ENCODE measurements at regions of chr6 and their contacts with region 1.

Region 1: DNA sequence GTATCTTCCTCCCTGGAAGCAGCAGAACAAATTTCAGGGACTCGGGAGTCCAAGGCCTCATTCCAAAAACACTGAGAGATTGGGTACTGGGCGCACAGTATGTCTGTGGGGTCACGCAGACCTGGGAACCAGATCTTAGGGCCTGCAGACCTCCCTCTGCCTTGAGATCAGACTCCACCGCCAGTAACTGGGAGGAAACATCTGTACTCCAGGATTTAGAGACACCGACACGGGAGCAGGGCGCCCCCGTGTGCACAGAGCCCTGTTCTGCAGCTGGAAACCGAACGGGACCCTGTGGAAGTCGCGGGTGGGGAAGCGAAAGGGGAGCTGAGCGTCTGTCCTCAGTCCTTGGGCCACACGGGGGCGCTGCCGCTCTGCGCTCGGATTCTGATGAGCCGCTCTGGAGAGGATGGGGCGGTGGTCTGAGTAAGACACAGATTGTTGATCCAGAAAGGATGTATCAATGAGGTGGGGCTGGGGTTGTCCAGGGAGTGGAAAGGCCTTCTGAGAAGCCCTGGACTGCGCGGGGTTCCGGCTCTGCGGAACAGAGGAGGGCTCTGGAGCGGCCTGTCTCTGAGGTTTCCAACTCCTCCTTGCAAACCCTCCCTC is 35.7 kb upstream of the HLA-E start:
- DNase-seq: peak; percentile 59 to 87
- H3K4me3 ChIP-seq: no peak overlapping the region
- H3K27ac ChIP-seq: no peak overlapping the region
- H3K4me1 ChIP-seq: no peaks in the 10 kb centered on the region
- H3K27me3 ChIP-seq: peaks cover 82% of the 10 kb centered on the region
- CTCF ChIP-seq: peak; percentile 80

Region 2: DNA sequence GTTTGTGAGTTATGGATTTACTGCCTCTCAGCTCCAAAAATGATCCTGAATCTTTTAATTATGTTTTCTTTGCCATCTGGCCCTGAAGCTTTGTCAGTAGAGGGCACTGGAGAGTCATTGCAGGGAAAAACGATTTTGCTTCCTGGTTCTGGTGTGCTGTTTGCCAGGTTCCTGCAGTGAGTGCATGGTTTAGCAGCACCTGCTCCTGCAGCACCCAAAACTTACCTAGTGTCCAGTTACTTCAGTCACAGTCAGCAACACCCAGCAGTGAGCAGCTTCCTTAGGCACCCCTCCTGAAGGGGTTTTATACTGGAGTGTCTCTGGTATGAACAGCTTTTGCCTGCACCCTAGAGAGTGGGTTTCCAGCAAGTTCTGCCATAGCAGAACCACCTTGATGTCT is 234.4 kb before region 1 on chr6:
- CTCF ChIA-PET with region 1: no interaction called
- POLR2A ChIA-PET with region 1: no interaction called
- intact Hi-C with region 1: loop called (anchors 1 kb)
- DNase-seq: peak; percentile 59 to 63
- H3K4me3 ChIP-seq: no peak overlapping the region
- H3K27ac ChIP-seq: no peak overlapping the region
- H3K4me1 ChIP-seq: no peaks in the 10 kb centered on the region
- H3K27me3 ChIP-seq: no peaks in the 10 kb centered on the region
- CTCF ChIP-seq: peak; percentile 76

Region 3: GRCh38 chr6:30238174-30238795 is 215.3 kb before region 1 on chr6:
- CTCF ChIA-PET with region 1: interaction called, 5 read pairs
- POLR2A ChIA-PET with region 1: no interaction called
- intact Hi-C with region 1: loop called (anchors 5 kb)
- DNase-seq: no peak
- H3K4me3 ChIP-seq: no peak overlapping the region
- H3K27ac ChIP-seq: no peak overlapping the region
- H3K4me1 ChIP-seq: no peaks in the 10 kb centered on the region
- H3K27me3 ChIP-seq: peaks cover 67% of the 10 kb centered on the region
- CTCF ChIP-seq: peak; percentile 55; the same call in 1 of the 2 replicates

Region 4: DNA sequence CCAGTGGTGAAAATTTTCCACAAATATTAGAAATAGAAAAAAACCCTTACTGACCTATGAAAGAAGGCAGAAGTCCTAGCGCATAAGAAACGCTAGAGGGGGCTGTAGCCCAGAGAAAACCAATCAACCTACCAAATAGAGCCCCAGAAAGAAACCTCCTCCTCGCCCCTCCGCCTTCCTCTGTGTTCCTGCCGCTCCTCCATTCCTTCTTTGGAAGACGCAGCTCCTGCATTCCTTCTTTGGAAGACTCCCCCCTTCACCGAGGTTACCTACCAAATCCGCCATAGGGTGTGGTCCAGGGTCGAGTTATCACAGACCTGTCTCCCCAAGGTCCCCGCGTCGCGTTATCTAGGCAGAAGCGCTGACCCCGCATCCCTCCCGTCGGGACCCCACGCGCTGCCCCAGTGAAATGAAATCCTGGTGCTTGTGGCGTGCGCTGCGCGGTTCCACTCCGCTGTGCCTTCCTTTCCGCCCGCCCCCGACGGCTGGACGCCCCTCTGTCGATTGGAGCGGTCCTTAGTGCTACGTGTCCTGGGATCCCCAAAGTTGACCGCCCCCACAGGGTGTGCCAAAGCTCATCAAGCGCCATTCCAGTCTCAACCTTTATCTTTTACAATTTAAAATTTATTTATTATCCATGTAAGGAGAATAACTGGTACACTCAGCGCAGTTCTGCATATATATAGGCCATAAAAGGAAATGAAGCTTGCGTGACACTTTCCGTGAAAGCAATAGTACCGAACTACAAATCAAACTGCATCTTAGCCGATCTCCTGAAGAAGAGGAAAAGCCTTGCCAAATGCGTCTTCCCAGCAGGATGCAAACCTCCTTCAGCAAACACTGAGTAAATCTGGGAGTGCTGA is 95.7 kb before region 1 on chr6:
- CTCF ChIA-PET with region 1: no interaction called
- POLR2A ChIA-PET with region 1: no interaction called
- intact Hi-C with region 1: loop called (anchors 10 kb)
- DNase-seq: peak in 1 of 2 experiments; percentile 31
- H3K4me3 ChIP-seq: no peak overlapping the region
- H3K27ac ChIP-seq: no peak overlapping the region
- H3K4me1 ChIP-seq: no peaks in the 10 kb centered on the region
- H3K27me3 ChIP-seq: peaks cover 47% of the 10 kb centered on the region
- CTCF ChIP-seq: peak; percentile 62

Region 5: DNA sequence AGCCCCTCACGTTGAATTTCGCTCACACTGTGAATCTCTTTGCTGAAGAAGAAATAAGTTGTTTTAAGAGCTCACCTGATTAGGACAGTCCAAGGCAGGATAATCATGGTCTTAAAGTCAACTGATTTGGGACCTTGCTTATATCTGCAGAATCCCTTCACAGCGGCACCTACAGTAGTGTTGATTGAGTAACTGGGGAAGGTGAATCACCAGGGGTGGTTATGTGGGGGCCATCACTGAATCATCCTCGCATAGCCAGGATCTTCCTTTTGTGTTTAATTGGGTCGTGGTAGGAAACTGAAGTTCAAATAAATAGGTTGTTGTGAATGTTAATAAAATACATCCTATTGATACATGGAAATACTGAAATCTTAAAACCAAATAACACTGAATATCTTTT is 929.5 kb after region 1 on chr6:
- CTCF ChIA-PET with region 1: no interaction called
- POLR2A ChIA-PET with region 1: no interaction called
- intact Hi-C with region 1: loop called (anchors 10 kb)
- DNase-seq: peak in 1 of 2 experiments; percentile 52
- H3K4me3 ChIP-seq: no peak overlapping the region
- H3K27ac ChIP-seq: no peak overlapping the region
- H3K4me1 ChIP-seq: no peaks in the 10 kb centered on the region
- H3K27me3 ChIP-seq: peaks cover 9% of the 10 kb centered on the region; the same call in 1 of the 2 replicates
- CTCF ChIP-seq: no peak